IMR-90 (cell line): ENCODE measurements at regions of chr7 and their contacts with region 1.

Region 1: GRCh38 chr7:46352004-46352954 is 431.2 kb upstream of the IGFBP3 start:
- DNase-seq: peak; percentile 72
- ATAC-seq: peak; percentile 70
- H3K4me3 ChIP-seq: no peak overlapping the region
- H3K27ac ChIP-seq: no peak overlapping the region
- H3K4me1 ChIP-seq: peaks cover 6% of the 10 kb centered on the region; the same call in 1 of the 2 replicates
- H3K27me3 ChIP-seq: no peaks in the 10 kb centered on the region
- CTCF ChIP-seq: peak; percentile 83
- POLR2A ChIP-seq: no peak
- RAD21 ChIP-seq: peak; percentile 97

Region 2: GRCh38 chr7:45890902-45891461 is 461.3 kb before region 1 on chr7:
- CTCF ChIA-PET with region 1: no interaction called
- POLR2A ChIA-PET with region 1: no interaction called
- dilution Hi-C with region 1: no loop called
- in situ Hi-C with region 1: no loop called
- intact Hi-C with region 1: loop called (anchors 1 kb)
- DNase-seq: peak; percentile 53
- ATAC-seq: no peak
- H3K4me3 ChIP-seq: no peak overlapping the region
- H3K27ac ChIP-seq: no peak overlapping the region
- H3K4me1 ChIP-seq: no peaks in the 10 kb centered on the region
- H3K27me3 ChIP-seq: peaks cover 40% of the 10 kb centered on the region
- CTCF ChIP-seq: peak; percentile 79
- POLR2A ChIP-seq: no peak
- RAD21 ChIP-seq: peak; percentile 79

Region 3: GRCh38 chr7:46486256-46487206 is 134.3 kb after region 1 on chr7:
- CTCF ChIA-PET with region 1: no interaction called
- POLR2A ChIA-PET with region 1: no interaction called
- dilution Hi-C with region 1: no loop called
- in situ Hi-C with region 1: no loop called
- intact Hi-C with region 1: no loop called
- DNase-seq: peak; percentile 88
- ATAC-seq: peak; percentile 83
- H3K4me3 ChIP-seq: no peak overlapping the region
- H3K27ac ChIP-seq: peak overlapping the region; percentile 41
- H3K4me1 ChIP-seq: peaks cover 14% of the 10 kb centered on the region
- H3K27me3 ChIP-seq: no peaks in the 10 kb centered on the region
- CTCF ChIP-seq: no peak
- POLR2A ChIP-seq: no peak
- RAD21 ChIP-seq: no peak

Region 4: DNA sequence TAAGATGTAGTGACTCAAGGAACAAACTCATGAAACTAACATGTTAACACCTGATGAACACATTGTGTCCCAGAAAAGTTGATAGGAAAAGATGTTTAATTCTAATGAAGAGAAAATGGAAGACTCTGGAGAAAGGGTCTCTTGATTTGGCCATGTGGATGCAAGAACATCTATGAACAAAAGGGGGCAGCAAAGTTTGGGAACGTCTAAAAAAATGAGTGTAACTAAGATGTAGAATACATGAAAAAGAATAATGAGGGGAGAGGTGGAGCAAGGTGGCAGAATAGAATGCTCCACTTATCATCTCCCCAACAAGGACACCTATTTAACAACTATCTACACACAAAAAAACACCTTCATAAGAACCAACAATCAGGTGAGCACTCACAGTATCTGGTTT is 424.5 kb after region 1 on chr7:
- CTCF ChIA-PET with region 1: no interaction called
- POLR2A ChIA-PET with region 1: no interaction called
- dilution Hi-C with region 1: no loop called
- in situ Hi-C with region 1: no loop called
- intact Hi-C with region 1: loop called (anchors 10 kb)
- DNase-seq: peak; percentile 36
- ATAC-seq: no peak
- H3K4me3 ChIP-seq: no peak overlapping the region
- H3K27ac ChIP-seq: no peak overlapping the region
- H3K4me1 ChIP-seq: no peaks in the 10 kb centered on the region
- H3K27me3 ChIP-seq: no peaks in the 10 kb centered on the region
- CTCF ChIP-seq: peak; percentile 55
- POLR2A ChIP-seq: no peak
- RAD21 ChIP-seq: peak; percentile 67